ENCODE measurements at regions of chr19 and their contacts with region 1.

Region 1: GRCh38 chr19:34145741-34146202 is 26.5 kb upstream of the LSM14A start:
- DNase-seq: no peak
- ATAC-seq: peak; percentile 50

Region 2: GRCh38 chr19:32674959-32675719 is 1470.6 kb before region 1 on chr19 and contains the start of gene ANKRD27:
- intact Hi-C with region 1: loop called (anchors 10 kb)
- DNase-seq: peak; percentile 99
- ATAC-seq: peak; percentile 99
- total RNA-seq, gene ANKRD27: 37.9 TPM

Region 3: GRCh38 chr19:34049944-34050343 is 95.8 kb before region 1 on chr19:
- intact Hi-C with region 1: no loop called
- DNase-seq: no peak
- ATAC-seq: no peak